Kidney (tissue), 22 donors: ENCODE measurements at regions of chr11 and their contacts with region 1.

Region 1: DNA sequence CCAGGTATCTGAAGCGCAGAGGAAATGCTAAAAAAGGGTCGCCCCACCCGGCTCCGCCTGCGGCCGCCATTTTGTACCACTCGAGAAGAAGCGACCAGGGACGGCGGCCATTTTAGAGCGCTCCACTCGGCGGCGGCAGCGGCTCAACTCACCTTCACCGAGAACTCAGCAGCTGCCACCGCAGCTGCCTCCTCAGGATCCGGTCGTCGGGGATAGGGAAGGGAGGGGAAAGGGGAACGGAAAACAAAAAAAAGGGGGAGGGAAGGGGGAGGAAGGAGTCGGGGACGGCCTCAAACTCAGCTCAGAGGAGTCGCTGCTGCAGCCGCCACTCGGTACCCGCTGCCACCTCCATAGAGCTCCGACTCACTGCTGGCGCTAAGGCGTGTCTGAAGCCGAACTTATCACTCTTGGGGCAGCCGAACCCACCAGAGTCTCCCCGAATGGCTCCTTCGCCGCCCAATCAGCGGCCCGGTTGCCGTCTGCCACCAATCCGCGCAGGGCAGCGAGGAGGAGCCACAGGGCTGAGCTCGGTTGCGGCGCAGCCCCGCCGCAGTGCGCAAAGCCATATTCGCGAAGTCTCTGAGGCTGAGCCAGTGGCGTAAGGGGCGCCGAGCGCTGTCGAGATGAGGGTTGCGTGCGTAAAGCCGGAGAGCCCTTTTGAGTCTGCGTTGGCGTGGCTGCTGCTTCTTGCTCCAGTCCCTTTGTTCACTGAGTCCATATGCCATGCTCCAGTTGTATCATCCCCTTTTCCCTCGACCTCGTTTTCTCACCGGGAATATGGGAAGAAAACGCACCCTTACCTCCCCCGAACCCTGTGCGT is at the start of gene EIF4G2:
- DNase-seq: peak; percentile 99 to 100 (median 100)
- H3K4me3 ChIP-seq: peak within 1 kb of the TSS; percentile 92 to 98 (median 95)
- H3K27ac ChIP-seq: peak within 1 kb of the TSS; percentile 99
- H3K4me1 ChIP-seq: peaks cover 0 to 14% (median 11%) of the 10 kb centered on the region in 3 donors
- H3K27me3 ChIP-seq: no peaks in the 10 kb centered on the region
- CTCF ChIP-seq: no peak
- total RNA-seq, gene EIF4G2: 716 TPM

Region 2: GRCh38 chr11:10857709-10858438 is 49.1 kb after region 1 on chr11 and contains the start of gene ZBED5:
- intact Hi-C with region 1: loop called (anchors 10 kb)
- DNase-seq: peak; percentile 98 to 99 (median 99)
- H3K4me3 ChIP-seq: peak within 1 kb of the TSS; percentile 92 to 98 (median 94)
- H3K27ac ChIP-seq: peak within 1 kb of the TSS; percentile 91 to 99
- H3K4me1 ChIP-seq: peaks cover 0 to 5% (median 4%) of the 10 kb centered on the region in 3 donors
- H3K27me3 ChIP-seq: no peaks in the 10 kb centered on the region
- CTCF ChIP-seq: peak; percentile 24
- total RNA-seq, gene ZBED5: 59.7 TPM